AG04449 (cell line): ENCODE measurements at regions of chr16 and their contacts with region 1.

Region 1: DNA sequence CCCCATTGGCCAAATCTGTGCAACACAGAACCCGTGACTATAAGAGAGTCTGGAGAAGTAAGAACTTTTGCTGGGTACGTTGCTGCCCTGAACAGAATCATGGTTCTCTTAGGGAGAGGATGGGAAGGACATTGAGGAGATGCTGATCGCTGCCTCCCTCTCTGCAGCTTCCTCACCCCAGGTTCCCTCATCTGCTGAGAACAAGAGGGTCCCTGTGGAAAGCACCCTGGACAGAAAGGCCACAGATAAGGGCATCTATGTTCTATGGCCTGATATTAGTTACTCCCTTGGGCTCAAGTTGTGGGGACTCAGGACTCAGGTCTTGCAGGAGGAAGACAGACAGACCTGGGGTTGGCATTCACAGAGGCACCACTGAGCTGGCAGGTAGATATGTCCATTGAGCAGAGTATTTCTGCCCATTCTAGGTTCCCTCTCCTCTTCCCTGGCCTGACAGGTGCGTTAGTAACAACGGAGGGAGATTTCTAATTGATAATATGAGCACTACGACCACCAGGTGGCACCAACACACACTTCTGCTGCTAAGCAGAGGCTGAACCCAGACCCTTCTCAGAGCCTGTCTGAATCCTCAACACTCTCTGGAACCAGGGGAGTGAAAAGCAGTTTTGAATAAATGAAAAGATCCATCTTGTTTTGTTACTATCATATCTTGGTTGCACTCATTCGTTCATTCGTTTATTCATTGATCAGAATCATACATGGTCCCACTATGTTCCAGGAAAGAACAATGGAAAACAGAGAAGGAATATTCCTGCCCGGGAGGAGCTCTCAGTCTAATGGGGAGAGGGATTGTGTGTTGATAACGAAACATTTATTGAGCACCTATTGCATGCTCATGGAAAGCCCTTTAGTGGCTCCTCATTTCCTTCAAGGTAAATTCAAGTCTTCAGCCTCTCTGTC is 56.4 kb downstream of the SLC6A2 start:
- DNase-seq: no peak
- H3K4me3 ChIP-seq: no peak overlapping the region
- CTCF ChIP-seq: peak; percentile 69

Region 2: DNA sequence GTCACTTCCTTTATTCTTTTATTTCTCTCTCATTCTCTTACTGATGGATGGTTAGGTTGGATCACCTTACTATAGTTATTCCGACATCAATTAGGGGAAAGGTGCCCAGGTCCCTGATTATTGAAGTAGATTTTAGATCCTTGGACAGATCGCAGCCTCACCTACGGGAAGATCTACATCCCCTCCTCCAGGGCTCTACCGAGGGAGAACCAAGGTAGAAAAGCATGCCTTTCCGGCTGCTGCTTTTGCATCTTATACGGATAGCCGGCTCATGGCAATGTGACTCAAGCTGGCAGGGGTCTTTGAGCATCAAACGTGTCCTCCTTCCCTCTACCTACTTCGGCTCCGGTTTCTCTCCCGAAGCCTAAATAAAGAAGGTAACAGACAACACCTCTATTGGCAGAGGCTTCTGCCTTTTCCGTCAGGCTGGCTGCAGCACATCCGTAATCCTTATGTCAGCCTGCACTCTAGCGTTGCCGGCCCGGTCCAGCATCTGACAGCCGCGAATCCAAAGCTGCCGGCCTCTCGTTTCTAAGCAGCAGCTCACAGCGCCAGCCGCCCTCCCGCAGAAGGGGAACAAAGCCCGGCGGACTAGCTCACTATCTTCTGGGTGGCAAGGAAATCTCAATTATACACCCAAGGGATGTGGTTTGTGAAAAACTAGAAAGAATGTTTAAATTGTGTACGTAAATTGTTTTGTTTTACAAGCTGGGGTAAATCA is 341.3 kb before region 1 on chr16:
- CTCF ChIA-PET with region 1: no interaction called
- POLR2A ChIA-PET with region 1: no interaction called
- DNase-seq: no peak
- H3K4me3 ChIP-seq: no peak overlapping the region
- CTCF ChIP-seq: peak; percentile 46

Region 3: GRCh38 chr16:55494994-55495421 is 217.2 kb before region 1 on chr16:
- CTCF ChIA-PET with region 1: no interaction called
- POLR2A ChIA-PET with region 1: no interaction called
- DNase-seq: peak; percentile 98
- H3K4me3 ChIP-seq: no peak overlapping the region
- CTCF ChIP-seq: peak; percentile 29

Region 4: DNA sequence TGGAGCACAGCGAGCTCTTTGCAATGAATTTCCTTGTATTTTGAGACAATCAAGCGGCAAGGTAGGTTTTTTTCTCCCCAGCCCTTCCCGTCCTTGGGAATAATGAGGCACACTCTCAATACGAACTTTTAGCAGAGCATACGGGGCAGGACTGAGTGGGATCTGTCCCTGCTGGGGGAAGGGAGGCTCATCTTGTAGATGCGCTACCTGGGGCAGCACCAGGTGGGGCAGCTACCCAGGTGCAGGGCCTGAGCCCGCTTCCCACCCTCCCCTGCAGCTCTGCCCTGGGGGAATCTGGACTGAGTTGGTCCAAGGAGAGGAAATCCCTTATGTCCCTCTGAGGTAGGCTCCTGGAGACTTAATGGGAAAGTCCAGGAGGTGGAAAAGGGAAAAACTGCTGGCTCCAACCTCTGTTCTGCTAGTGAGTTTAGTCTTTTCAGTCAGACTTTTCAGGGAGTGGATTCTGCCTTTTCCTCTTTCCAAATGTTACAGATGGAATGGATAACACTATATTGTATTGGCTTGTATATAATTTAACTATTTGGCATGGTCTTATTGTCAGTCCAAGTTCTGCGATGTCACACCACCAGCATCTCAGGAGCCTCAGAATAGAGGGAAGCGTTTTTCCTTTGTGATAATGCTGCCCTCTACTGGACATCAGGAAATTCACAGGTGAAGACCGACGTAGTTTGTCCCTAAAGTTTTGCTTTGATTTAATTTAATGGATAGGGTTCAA is 130.3 kb after region 1 on chr16:
- CTCF ChIA-PET with region 1: interaction called, 25 read pairs
- POLR2A ChIA-PET with region 1: no interaction called
- DNase-seq: no peak
- H3K4me3 ChIP-seq: no peak overlapping the region
- CTCF ChIP-seq: peak; percentile 54

Region 5: DNA sequence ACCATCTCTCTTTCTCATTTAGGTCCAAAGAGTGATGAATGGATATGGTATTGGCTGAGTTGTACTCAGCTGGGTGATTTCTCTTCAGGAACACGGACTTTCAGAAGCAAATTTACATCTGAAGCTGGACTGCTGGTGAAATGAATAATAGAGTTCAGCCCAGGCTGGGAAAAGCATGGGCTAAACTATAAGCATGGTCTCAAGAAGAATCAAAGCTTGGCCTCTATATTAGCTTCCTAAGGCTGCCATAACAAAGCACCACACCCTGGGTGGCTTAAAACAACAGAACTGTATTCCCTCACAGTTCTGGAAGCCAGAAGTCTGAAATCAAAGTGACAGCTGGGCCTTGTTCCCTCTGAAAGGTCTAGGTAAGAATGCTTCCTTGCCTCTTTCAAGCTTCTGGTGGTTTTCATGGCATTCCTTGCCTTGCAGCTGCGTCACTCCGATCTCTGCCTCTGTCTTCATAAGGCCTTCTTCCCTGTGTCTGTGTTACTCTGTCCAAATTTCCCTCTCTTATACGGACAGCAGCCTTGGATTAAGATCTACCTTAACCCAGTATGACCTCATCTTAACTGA is 252.8 kb after region 1 on chr16:
- CTCF ChIA-PET with region 1: no interaction called
- POLR2A ChIA-PET with region 1: no interaction called
- DNase-seq: no peak
- H3K4me3 ChIP-seq: no peak overlapping the region
- CTCF ChIP-seq: no peak